Naive thymus-derived CD4-positive, alpha-beta T cell (primary cell): ENCODE measurements at regions of chr3 and their contacts with region 1.

Region 1: GRCh38 chr3:20185701-20186598 is at the start of gene SGO1:
- DNase-seq: peak; percentile 98 to 100 (median 99)
- ATAC-seq: peak; percentile 95
- H3K4me3 ChIP-seq: peak within 1 kb of the TSS; percentile 68
- H3K4me3 Mint-ChIP-seq: no peak within 1 kb of the TSS
- H3K27ac ChIP-seq: peak within 1 kb of the TSS; percentile 93
- H3K27ac Mint-ChIP-seq: no peak within 1 kb of the TSS
- H3K4me1 ChIP-seq: peaks cover 16 to 17% of the 10 kb centered on the region in 2 donors
- H3K4me1 Mint-ChIP-seq: peaks cover 0 to 25% (median 4%) of the 10 kb centered on the region in 7 donors
- H3K27me3 ChIP-seq: no peaks in the 10 kb centered on the region
- H3K27me3 Mint-ChIP-seq: peaks cover 0 to 2% (median 0%) of the 10 kb centered on the region in 5 donors
- total RNA-seq, gene SGO1: 0.44 to 25.0 (median 0.89) TPM

Region 2: GRCh38 chr3:19146685-19147650 is 1039.0 kb before region 1 on chr3:
- CTCF ChIA-PET with region 1: no interaction called
- POLR2A ChIA-PET with region 1: no interaction called
- intact Hi-C with region 1: loop called (anchors 2 kb)
- DNase-seq: peak; percentile 25 to 88 (median 61)
- ATAC-seq: peak; percentile 75
- H3K4me3 ChIP-seq: peak overlapping the region; percentile 72
- H3K4me3 Mint-ChIP-seq: peak overlapping the region; percentile 90 to 95 (median 93)
- H3K27ac ChIP-seq: peak overlapping the region; percentile 59
- H3K27ac Mint-ChIP-seq: peak overlapping the region; percentile 25 to 94 (median 84)
- H3K4me1 ChIP-seq: peaks cover 3 to 17% of the 10 kb centered on the region in 2 donors
- H3K4me1 Mint-ChIP-seq: peaks cover 8 to 28% (median 21%) of the 10 kb centered on the region in 7 donors
- H3K27me3 ChIP-seq: no peaks in the 10 kb centered on the region
- H3K27me3 Mint-ChIP-seq: peaks cover 40 to 63% (median 53%) of the 10 kb centered on the region in 5 donors

Region 3: DNA sequence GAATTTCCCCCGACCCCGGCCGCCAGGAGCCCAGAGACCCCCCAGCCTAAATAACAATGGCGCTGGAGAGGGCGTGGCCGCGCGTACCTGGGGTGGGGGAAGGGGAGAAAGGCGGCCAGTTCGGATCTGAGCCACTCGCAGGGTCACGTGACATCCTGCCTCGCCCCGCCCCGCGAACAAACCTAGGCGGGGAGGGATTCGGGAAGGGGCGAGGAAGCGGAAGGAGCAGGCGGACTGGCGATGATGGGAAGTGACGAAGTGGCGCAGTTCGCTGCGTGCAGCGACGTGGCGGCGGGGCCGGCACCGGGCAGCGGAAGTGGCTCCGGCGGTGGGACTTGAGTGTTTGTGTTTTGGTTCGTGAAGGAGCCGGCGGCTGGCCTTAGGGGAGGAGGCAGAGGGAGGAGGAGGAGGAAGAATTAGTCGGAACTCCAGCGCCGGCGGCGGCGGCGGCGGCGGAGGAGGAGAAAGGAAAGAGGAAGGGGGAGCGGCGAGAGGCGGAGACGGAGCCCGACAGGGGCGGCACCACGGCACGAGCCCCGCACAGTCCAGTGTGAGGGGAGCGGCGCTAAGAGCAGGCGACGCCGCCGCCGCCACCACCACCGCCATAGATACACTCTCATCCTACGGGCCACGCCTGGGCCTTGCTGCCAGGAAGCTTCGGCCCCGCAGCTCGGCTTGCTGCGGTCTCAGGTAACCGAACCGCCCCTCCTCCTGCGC is 239.0 kb before region 1 on chr3 and contains the start of gene RAB5A:
- CTCF ChIA-PET with region 1: no interaction called
- POLR2A ChIA-PET with region 1: interaction called, 5 read pairs
- intact Hi-C with region 1: loop called (anchors 1 kb)
- DNase-seq: peak; percentile 87 to 98 (median 96)
- ATAC-seq: peak; percentile 89
- H3K4me3 ChIP-seq: peak within 1 kb of the TSS; percentile 88
- H3K4me3 Mint-ChIP-seq: peak within 1 kb of the TSS; percentile 91 to 99 (median 97)
- H3K27ac ChIP-seq: peak within 1 kb of the TSS; percentile 94
- H3K27ac Mint-ChIP-seq: peak within 1 kb of the TSS; percentile 98 to 100 (median 99)
- H3K4me1 ChIP-seq: peaks cover 19 to 27% of the 10 kb centered on the region in 2 donors
- H3K4me1 Mint-ChIP-seq: peaks cover 25 to 68% (median 59%) of the 10 kb centered on the region in 7 donors
- H3K27me3 ChIP-seq: no peaks in the 10 kb centered on the region
- H3K27me3 Mint-ChIP-seq: peaks cover 0 to 3% (median 0%) of the 10 kb centered on the region in 5 donors
- total RNA-seq, gene RAB5A: 50.3 to 92.2 (median 58.9) TPM

Region 4: GRCh38 chr3:20161713-20162112 is 24.2 kb before region 1 on chr3:
- CTCF ChIA-PET with region 1: no interaction called
- POLR2A ChIA-PET with region 1: interaction called, 3 read pairs
- intact Hi-C with region 1: loop called in 1 of 2 experiments (anchors 2 kb)
- DNase-seq: no peak
- ATAC-seq: no peak
- H3K4me3 ChIP-seq: no peak overlapping the region
- H3K4me3 Mint-ChIP-seq: no peak overlapping the region
- H3K27ac ChIP-seq: no peak overlapping the region
- H3K27ac Mint-ChIP-seq: peak overlapping the region in 1 of 9 donors; percentile 48
- H3K4me1 ChIP-seq: peaks cover 10 to 12% of the 10 kb centered on the region in 2 donors
- H3K4me1 Mint-ChIP-seq: peaks cover 12 to 28% (median 22%) of the 10 kb centered on the region in 7 donors
- H3K27me3 ChIP-seq: no peaks in the 10 kb centered on the region
- H3K27me3 Mint-ChIP-seq: peaks cover 0 to 6% (median 0%) of the 10 kb centered on the region in 5 donors

Region 5: GRCh38 chr3:21562243-21562642 is 1376.3 kb after region 1 on chr3:
- CTCF ChIA-PET with region 1: no interaction called
- POLR2A ChIA-PET with region 1: no interaction called
- intact Hi-C with region 1: no loop called
- DNase-seq: no peak
- ATAC-seq: no peak
- H3K4me3 ChIP-seq: no peak overlapping the region
- H3K4me3 Mint-ChIP-seq: no peak overlapping the region
- H3K27ac ChIP-seq: no peak overlapping the region
- H3K27ac Mint-ChIP-seq: no peak overlapping the region
- H3K4me1 ChIP-seq: no peaks in the 10 kb centered on the region
- H3K4me1 Mint-ChIP-seq: no peaks in the 10 kb centered on the region
- H3K27me3 ChIP-seq: no peaks in the 10 kb centered on the region
- H3K27me3 Mint-ChIP-seq: no peaks in the 10 kb centered on the region